Common myeloid progenitor, CD34-positive (primary cell): ENCODE measurements at regions of chr17 and their contacts with region 1.

Region 1: DNA sequence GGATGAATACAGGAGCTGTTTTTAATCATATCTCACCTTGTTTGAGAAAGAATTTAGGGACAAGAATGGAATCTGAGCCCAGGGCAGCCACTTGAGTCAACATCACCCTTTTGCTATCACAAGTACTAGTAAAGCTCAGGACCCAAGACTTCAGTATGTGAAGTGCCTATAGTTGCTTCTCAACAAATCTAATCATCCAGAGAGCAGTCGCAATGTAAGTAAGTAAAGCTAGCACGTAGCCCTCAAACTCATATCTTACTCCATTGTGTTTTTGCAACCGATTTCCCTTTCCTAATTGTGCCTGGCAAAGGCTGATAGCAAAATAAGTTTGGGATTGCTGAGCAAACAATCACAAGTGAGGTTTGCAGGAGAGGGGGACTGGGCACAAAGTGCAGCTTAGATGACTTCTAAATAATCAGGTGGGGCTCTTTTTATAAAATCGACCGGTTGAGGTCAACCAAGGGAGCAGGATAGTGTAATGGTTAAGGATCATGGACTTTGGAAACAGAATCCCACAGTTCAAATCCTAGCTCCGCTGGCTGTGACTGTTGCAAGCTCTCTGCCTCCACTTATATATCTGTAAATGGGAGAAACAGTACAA is 13.0 kb downstream of the TOB1 start:
- DNase-seq: no peak
- H3K4me3 ChIP-seq: no peak overlapping the region
- H3K27ac ChIP-seq: no peak overlapping the region
- H3K4me1 ChIP-seq: peaks cover 0 to 12% (median 3%) of the 10 kb centered on the region in 4 experiments
- H3K27me3 ChIP-seq: peaks cover 0 to 5% (median 0%) of the 10 kb centered on the region in 5 experiments

Region 2: DNA sequence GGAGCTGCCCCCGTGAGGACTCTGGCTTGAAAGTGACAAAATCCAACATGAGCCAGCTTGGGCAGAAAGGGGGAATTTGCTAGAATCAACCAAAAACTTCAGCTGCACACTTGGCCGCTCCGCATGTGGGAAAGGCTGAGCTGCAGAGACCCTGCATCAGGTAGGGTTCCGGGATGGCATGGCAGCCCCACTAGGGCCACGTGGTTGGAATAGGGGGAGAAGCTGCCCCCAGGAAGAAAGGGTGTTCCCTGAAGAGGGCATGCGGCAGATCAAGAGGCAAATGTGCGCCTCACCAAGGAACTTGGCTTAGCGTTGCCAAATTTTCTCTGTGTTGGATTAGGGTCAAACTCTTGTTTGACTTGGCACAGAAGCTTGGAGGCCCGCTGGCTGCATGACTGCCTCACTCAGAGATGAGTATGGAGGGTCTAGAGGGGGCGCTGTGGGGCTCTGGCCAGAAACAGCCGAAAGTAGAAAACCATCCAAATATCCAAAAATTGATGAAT is 46.9 kb before region 1 on chr17:
- CTCF ChIA-PET with region 1: no interaction called
- POLR2A ChIA-PET with region 1: no interaction called
- DNase-seq: no peak
- H3K4me3 ChIP-seq: no peak overlapping the region
- H3K27ac ChIP-seq: no peak overlapping the region
- H3K4me1 ChIP-seq: no peaks in the 10 kb centered on the region
- H3K27me3 ChIP-seq: no peaks in the 10 kb centered on the region

Region 3: DNA sequence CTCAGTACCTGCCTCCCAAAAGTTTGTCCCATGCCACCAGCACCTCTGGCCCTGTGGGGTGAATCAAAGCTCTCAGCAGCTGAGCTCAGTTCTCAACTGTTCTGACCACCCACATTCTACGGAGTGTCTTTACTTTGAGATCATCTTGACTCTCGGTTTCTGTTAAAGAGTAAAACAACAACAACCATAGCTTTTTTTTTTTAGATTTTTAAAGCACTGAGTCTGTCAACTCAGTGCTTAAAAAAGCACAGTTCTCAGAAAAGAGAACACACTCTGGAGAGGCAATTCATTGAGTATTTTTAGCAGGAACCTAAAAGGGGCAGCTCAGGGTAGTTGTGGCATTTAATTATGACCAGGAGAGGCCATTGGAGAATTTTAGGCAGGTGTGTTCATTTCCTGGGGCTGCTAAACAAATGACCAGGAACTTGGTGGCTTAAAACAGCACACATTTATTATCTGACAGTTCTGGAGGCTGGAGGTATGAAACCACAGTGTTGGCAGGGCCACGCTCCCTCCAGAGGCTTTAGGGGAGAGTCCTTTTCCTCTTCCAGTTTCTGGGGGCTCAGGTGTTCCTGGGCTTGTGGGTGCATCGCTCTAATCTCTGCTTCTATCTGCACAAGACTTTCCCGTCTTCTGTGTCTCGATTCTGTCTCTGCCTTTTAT is 24.5 kb before region 1 on chr17:
- CTCF ChIA-PET with region 1: interaction called, 13 read pairs
- POLR2A ChIA-PET with region 1: no interaction called
- DNase-seq: peak in 1 of 3 donors; percentile 26
- H3K4me3 ChIP-seq: peak overlapping the region in 3 of 7 experiments; percentile 24 to 26 (median 25)
- H3K27ac ChIP-seq: peak overlapping the region; percentile 17 to 47
- H3K4me1 ChIP-seq: peaks cover 0 to 45% (median 42%) of the 10 kb centered on the region in 4 experiments
- H3K27me3 ChIP-seq: no peaks in the 10 kb centered on the region

Region 4: GRCh38 chr17:50841949-50842354 is 11.2 kb before region 1 on chr17:
- CTCF ChIA-PET with region 1: interaction called, 21 read pairs
- POLR2A ChIA-PET with region 1: no interaction called
- DNase-seq: peak; percentile 55 to 78 (median 71)
- H3K4me3 ChIP-seq: no peak overlapping the region
- H3K27ac ChIP-seq: no peak overlapping the region
- H3K4me1 ChIP-seq: peaks cover 0 to 3% (median 0%) of the 10 kb centered on the region in 4 experiments
- H3K27me3 ChIP-seq: no peaks in the 10 kb centered on the region

Region 5: GRCh38 chr17:50865984-50866774 is 13.1 kb after region 1 on chr17 and contains the start of gene TOB1:
- CTCF ChIA-PET with region 1: interaction called, 31 read pairs
- POLR2A ChIA-PET with region 1: interaction called, 21 read pairs
- DNase-seq: peak; percentile 93 to 97 (median 97)
- H3K4me3 ChIP-seq: peak within 1 kb of the TSS; percentile 75 to 95 (median 84)
- H3K27ac ChIP-seq: peak within 1 kb of the TSS; percentile 74 to 86
- H3K4me1 ChIP-seq: peaks cover 23 to 36% (median 30%) of the 10 kb centered on the region in 4 experiments
- H3K27me3 ChIP-seq: peaks cover 0 to 6% (median 2%) of the 10 kb centered on the region in 5 experiments

Region 6: DNA sequence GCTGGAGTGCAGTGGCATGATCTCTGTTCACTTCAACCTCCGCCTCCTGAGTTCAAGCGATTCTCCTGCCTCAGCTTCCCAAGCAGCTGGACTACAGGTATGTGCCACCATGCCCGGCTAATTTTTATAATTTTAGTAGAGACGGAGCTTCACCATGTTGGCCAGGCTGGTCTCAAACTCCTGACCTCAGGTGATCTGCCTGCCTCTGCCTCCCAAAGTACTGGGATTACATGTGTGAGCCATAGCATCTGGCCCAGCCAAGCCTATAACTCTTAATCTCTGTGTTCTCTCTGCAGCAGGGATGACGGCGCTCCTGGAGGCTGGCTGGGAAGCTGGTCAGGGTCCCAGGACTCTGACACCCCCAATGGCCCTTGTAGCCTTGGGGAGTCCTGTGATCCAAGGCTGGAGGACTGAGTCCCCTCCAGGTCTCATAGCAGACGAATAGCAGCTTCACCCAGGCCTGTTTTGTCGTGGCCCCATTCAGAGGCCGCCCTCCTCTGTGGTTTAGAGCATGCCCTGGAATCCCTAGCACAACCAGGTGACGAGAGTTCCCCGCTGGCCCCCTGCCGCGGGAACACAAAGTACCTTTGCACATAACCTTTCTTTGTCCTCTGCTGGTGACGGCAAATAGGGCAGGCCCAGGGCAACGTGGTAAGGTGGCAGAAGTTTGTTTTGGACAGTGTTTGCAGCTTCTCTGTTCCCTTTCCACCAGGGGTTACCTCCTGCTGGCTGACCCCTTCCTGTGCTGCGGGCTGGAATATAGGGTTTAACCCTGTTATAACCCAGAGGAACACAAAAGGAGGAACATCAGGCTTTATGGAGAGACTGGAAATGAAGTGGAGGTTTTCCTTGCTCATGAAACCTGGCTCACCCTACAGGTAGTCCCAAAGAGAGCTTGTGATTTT is 56.0 kb after region 1 on chr17:
- CTCF ChIA-PET with region 1: interaction called, 10 read pairs
- POLR2A ChIA-PET with region 1: no interaction called
- DNase-seq: peak in 2 of 3 donors; percentile 39 to 40
- H3K4me3 ChIP-seq: no peak overlapping the region
- H3K27ac ChIP-seq: no peak overlapping the region
- H3K4me1 ChIP-seq: peaks cover 6 to 33% (median 21%) of the 10 kb centered on the region in 4 experiments
- H3K27me3 ChIP-seq: no peaks in the 10 kb centered on the region

Region 7: GRCh38 chr17:50967795-50968194 is 114.7 kb after region 1 on chr17:
- CTCF ChIA-PET with region 1: interaction called, 11 read pairs
- POLR2A ChIA-PET with region 1: no interaction called
- DNase-seq: no peak
- H3K4me3 ChIP-seq: no peak overlapping the region
- H3K27ac ChIP-seq: no peak overlapping the region
- H3K4me1 ChIP-seq: peaks cover 0 to 9% (median 0%) of the 10 kb centered on the region in 4 experiments
- H3K27me3 ChIP-seq: no peaks in the 10 kb centered on the region